Psoas muscle (tissue), 8 donors: ENCODE measurements at regions of chr21 and their contacts with region 1.

Region 1: DNA sequence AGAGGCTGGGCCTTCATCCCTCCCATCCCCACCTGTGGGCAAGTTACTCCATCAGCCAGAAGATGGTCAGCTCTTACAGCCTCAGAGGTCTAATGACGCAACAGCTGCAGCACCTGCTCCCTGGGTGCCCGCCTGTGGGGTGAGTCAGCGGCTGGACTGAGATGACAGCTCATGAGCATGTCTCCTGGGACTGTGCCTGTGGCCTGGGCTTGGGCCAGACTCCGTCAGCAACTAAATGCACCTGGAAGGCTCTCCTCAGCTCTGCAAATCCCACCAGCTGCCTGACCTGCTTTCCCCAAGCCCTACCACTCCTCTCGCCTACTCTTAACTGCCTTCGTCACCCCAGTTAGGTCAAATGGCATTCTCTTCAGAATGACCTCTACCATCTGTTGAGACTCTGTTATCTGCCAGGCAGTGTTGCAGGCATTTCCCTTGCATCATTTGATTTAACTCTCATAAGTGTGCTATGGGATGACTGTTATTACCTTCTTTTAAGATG is 47.7 kb downstream of the ETS2 start:
- DNase-seq: peak; percentile 90 to 98
- ATAC-seq: peak; percentile 87 to 95 (median 90)
- H3K4me3 ChIP-seq: no peak overlapping the region
- H3K27ac ChIP-seq: peak overlapping the region; percentile 85
- H3K4me1 ChIP-seq: peaks cover 30% of the 10 kb centered on the region
- H3K27me3 ChIP-seq: no peaks in the 10 kb centered on the region
- CTCF ChIP-seq: no peak

Region 2: GRCh38 chr21:38811257-38811656 is 42.2 kb before region 1 on chr21:
- intact Hi-C with region 1: loop called in 1 of 2 experiments (anchors 5 kb)
- DNase-seq: no peak
- ATAC-seq: no peak
- H3K4me3 ChIP-seq: peak overlapping the region; percentile 76
- H3K27ac ChIP-seq: peak overlapping the region; percentile 69
- H3K4me1 ChIP-seq: peaks cover 34% of the 10 kb centered on the region
- H3K27me3 ChIP-seq: no peaks in the 10 kb centered on the region
- CTCF ChIP-seq: no peak

Region 3: GRCh38 chr21:38897532-38898422 is 44.3 kb after region 1 on chr21:
- intact Hi-C with region 1: loop called (anchors 1 to 5 kb)
- DNase-seq: no peak
- ATAC-seq: peak; percentile 84 to 88 (median 86)
- H3K4me3 ChIP-seq: peak overlapping the region; percentile 24
- H3K27ac ChIP-seq: peak overlapping the region; percentile 89
- H3K4me1 ChIP-seq: peaks cover 33% of the 10 kb centered on the region
- H3K27me3 ChIP-seq: no peaks in the 10 kb centered on the region
- CTCF ChIP-seq: no peak

Region 4: DNA sequence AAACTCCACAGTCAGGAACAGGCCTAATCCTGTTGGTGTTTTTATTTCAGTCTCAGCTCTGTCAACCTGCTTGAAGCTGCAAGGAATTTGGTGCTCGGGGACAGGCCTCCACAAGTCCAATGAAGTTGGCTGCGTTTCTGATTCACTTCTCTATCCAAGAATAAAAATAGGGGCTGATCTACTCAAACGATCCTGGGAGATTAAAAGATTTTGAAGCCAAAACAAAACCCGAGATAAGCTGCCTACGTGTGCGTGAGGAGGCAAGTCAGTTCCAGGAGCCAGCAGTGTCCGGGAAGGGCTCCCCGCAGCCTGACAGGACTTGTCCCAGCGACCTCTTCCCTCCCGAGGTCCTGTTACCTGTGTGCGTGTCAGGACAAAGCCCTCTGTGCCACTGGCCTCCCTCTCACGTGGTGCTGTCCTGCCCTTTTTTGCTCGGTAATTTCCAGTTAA is 50.2 kb after region 1 on chr21:
- intact Hi-C with region 1: loop called (anchors 2 to 5 kb)
- DNase-seq: peak; percentile 71 to 87
- ATAC-seq: peak; percentile 78 to 81 (median 78)
- H3K4me3 ChIP-seq: no peak overlapping the region
- H3K27ac ChIP-seq: peak overlapping the region; percentile 96
- H3K4me1 ChIP-seq: peaks cover 43% of the 10 kb centered on the region
- H3K27me3 ChIP-seq: no peaks in the 10 kb centered on the region
- CTCF ChIP-seq: no peak

Region 5: DNA sequence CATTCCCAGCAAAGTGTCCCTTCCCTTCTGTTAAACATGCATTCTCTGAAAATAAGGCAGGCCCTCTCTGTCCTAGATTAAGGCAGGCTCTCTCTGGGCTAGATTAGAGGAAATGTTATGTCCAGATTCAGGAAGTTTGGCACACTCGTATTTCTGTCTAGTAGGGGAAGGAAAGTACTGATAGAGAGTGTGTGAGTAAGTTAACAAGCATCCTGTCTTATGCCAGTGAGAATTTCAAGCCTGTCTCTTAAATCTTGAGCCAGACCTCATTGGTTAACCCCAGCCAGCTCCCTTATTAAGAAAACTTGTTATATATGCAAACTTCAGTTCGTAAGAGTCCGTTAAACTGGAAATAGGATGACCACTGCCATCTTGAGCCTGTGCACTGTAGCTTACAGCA is 923.1 kb after region 1 on chr21:
- intact Hi-C with region 1: no loop called
- DNase-seq: no peak
- ATAC-seq: no peak
- H3K4me3 ChIP-seq: no peak overlapping the region
- H3K27ac ChIP-seq: no peak overlapping the region
- H3K4me1 ChIP-seq: no peaks in the 10 kb centered on the region
- H3K27me3 ChIP-seq: no peaks in the 10 kb centered on the region
- CTCF ChIP-seq: no peak

Region 6: GRCh38 chr21:40215941-40216340 is 1362.5 kb after region 1 on chr21:
- intact Hi-C with region 1: no loop called
- DNase-seq: no peak
- ATAC-seq: no peak
- H3K4me3 ChIP-seq: no peak overlapping the region
- H3K27ac ChIP-seq: no peak overlapping the region
- H3K4me1 ChIP-seq: no peaks in the 10 kb centered on the region
- H3K27me3 ChIP-seq: peaks cover 0 to 2% (median 0%) of the 10 kb centered on the region in 3 donors
- CTCF ChIP-seq: no peak